Right cardiac atrium (tissue), 5 donors: ENCODE measurements at regions of chr15 and their contacts with region 1.

Region 1: DNA sequence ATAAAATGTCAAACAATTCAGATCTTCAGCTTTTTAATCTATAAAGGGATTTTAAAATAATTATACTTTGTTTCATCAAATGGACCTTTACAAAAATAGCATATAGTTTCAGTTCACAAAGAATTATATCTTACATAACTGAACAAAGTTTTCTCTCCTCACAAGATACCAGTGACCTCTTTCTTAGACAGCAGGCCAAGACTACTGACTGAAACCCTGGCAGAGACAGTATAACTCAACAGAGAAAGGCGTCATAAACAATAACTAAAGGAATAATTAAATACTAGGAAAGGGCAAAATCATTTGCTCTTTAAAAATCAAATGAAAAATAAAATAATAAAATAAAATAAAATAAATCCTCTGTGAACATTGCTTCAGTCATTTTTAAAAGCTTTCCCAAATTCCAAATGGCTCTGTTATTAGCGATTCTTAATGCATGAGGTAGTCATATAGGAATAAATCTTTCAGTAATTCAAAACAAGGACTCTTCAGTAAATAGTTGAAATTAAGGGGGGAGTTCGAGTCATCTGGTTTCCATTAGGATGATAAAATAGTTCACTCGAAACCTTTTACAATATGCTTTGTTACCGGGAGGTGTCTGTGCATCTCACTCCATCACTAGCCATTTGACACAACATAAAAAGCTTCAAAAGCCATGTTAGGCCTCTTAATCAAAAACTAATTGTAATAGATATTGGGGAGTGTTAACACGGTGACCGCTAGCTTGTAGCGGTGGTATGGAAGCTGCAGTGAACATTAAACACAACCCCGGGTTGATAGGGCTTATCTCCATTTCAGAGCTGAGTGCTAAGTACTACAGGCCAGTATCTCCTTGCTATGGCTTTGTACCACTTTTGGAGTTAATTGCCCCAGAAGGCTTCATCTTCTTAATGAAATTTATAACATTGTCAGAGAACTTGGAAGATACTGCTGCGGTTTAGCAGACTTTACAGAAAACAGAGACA is 142.9 kb upstream of the NR2F2 start:
- DNase-seq: no peak
- ATAC-seq: no peak
- H3K4me3 ChIP-seq: no peak overlapping the region
- H3K27ac ChIP-seq: no peak overlapping the region
- H3K4me1 ChIP-seq: no peaks in the 10 kb centered on the region
- H3K27me3 ChIP-seq: no peaks in the 10 kb centered on the region

Region 2: GRCh38 chr15:95972041-95972553 is 215.5 kb before region 1 on chr15:
- intact Hi-C with region 1: no loop called
- DNase-seq: peak; percentile 34 to 80 (median 76)
- ATAC-seq: peak; percentile 66 to 75
- H3K4me3 ChIP-seq: no peak overlapping the region
- H3K27ac ChIP-seq: no peak overlapping the region
- H3K4me1 ChIP-seq: peaks cover 3% of the 10 kb centered on the region
- H3K27me3 ChIP-seq: no peaks in the 10 kb centered on the region

Region 3: DNA sequence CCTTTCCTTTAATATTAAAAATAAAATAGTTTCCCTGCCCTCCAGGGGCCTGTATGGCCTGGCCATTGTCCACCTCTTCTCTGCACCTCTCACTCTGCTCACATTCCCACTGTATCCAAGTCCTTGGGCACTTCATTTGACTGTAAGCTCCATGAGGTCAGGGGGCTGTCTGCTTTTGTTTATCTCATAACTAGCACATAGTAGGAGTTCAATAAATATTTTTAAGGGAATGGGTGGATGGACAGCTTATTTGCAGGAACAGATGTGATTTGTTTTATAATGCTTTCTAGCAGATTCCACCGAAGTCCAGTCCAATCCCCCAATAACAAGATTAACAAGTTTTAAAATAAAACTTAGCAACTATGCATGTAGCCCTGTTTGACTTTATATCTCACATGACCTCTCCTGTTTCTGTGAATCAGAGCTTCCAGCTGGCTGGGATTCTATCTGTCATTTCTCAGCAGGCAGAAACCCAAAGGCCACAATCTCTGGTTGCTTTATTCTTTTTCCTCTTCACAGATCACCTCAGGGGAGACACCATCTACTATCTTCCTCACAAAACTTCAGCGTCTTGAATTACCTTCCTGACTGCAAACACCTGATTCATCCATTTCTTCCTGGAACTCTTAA is 19.9 kb after region 1 on chr15:
- intact Hi-C with region 1: loop called in 1 of 4 experiments (anchors 2 kb)
- DNase-seq: no peak
- ATAC-seq: no peak
- H3K4me3 ChIP-seq: no peak overlapping the region
- H3K27ac ChIP-seq: no peak overlapping the region
- H3K4me1 ChIP-seq: no peaks in the 10 kb centered on the region
- H3K27me3 ChIP-seq: no peaks in the 10 kb centered on the region